GM18951 (cell line): ENCODE measurements at regions of chr13 and their contacts with region 1.

Region 1: DNA sequence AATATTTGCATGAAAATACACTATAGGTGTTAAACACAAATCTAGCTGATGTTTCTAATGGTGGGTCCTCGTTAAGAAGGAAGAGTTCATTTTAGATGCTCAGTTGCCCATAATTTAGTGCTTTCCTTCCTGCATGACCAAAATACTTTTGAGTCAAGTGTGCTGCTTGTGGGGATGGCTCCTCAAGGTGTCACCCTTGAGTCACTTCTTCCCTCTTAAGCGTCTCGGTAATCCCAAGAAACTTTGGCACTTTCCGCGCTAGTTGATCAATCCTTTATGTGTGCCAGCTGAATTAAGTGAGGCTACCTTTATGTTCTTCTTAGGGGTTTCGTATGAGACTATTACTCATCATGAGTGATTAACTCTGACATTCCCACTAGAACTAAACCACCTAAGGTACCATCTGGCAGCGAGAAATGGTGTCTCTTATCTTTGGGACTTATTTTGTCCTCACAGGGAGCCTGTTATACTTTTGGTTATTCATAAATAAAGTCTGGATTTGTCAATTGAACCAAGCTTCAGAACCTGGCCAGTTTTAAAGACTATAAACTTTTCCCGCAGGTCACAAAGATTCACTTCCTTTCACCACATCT is 106.8 kb downstream of the NHLRC3 start:
- POLR2A ChIP-seq: no peak

Region 2: GRCh38 chr13:38819053-38819452 is 326.0 kb before region 1 on chr13:
- in situ Hi-C with region 1: no loop called
- POLR2A ChIP-seq: no peak

Region 3: DNA sequence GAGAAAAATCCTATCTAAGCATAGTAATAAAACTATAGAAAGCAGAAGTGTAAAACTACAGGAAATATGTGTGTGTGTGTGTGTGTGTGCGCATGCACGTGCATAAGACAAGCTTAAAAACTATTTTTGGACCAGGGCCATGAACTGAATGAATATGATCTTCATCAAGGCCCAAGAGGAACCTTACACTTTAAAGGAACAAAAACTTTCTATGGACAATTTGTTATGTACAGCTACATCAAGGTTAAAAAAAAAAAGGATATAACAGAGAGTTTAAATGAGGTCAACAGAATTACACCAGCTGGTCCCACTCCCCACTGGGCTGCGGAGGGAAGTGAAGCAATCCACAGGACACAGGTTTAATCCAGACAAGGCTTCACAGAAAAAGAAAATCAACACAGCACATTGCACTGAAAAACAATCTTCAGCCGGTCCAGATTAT is 306.8 kb after region 1 on chr13:
- in situ Hi-C with region 1: no loop called
- POLR2A ChIP-seq: no peak

Region 4: GRCh38 chr13:39602614-39603366 is 457.8 kb after region 1 on chr13 and contains the start of gene LHFPL6:
- in situ Hi-C with region 1: loop called (anchors 25 kb)
- POLR2A ChIP-seq: peak; percentile 46

Region 5: DNA sequence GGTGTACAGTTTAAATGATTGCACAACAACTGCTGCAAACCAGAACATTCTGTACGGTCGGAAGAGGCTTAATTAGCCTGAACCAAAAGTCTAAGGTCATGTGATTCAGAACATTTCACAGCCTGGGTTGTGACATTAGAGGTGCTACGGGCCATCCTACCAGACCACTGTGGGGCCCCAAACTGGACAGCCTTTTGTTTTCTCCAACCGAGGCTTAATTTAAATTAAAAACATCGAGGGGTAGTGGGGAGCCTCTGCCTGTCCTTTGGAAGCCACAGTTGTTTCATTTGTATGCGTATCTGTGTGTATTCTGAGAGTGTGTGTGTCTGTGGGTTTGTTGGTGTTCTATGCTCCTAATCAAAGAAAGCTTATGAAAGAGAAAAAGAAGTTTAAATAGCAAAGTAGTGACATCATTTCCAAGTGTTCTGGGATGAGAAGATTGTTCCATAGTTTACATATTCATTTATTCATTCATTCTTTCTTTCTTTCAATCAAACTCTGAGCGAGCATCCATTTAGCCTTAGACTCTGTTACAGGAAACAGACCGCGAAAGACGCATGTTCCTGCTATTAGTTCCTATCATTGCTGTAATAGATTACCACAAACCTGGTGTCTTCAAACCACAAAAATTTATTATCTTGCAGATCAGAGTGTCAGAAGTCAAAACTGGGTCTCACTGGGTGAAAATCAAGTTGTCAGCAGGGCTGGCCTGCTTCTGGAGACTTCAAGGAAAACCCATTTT is 1076.6 kb after region 1 on chr13:
- in situ Hi-C with region 1: no loop called
- POLR2A ChIP-seq: no peak